CD8-positive, alpha-beta T cell (primary cell): ENCODE measurements at regions of chr11 and their contacts with region 1.

Region 1: GRCh38 chr11:35165423-35166368 is 26.7 kb downstream of the CD44 start:
- DNase-seq: peak; percentile 69 to 99 (median 87)
- ATAC-seq: peak; percentile 66
- H3K4me3 ChIP-seq: peak overlapping the region; percentile 31 to 34
- H3K4me3 Mint-ChIP-seq: peak overlapping the region; percentile 74
- H3K27ac ChIP-seq: peak overlapping the region; percentile 96 to 97
- H3K27ac Mint-ChIP-seq: peak overlapping the region; percentile 100
- H3K4me1 ChIP-seq: peaks cover 97% of the 10 kb centered on the region
- H3K4me1 Mint-ChIP-seq: peaks cover 100% of the 10 kb centered on the region
- H3K27me3 ChIP-seq: no peaks in the 10 kb centered on the region
- H3K27me3 Mint-ChIP-seq: no peaks in the 10 kb centered on the region
- CTCF ChIP-seq: no peak

Region 2: GRCh38 chr11:34916015-34916842 is 249.5 kb before region 1 on chr11 and contains the starts of genes APIP and PDHX:
- CTCF ChIA-PET with region 1: no interaction called
- POLR2A ChIA-PET with region 1: no interaction called
- intact Hi-C with region 1: loop called in 1 of 2 experiments (anchors 1 kb)
- DNase-seq: peak; percentile 86 to 96 (median 94)
- ATAC-seq: peak; percentile 89
- H3K4me3 ChIP-seq: peak within 1 kb of the TSS; percentile 70 to 94
- H3K4me3 Mint-ChIP-seq: peak within 1 kb of the TSS; percentile 96
- H3K27ac ChIP-seq: peak within 1 kb of the TSS; percentile 57 to 72
- H3K27ac Mint-ChIP-seq: peak within 1 kb of the TSS; percentile 97
- H3K4me1 ChIP-seq: peaks cover 18% of the 10 kb centered on the region
- H3K4me1 Mint-ChIP-seq: peaks cover 53% of the 10 kb centered on the region
- H3K27me3 ChIP-seq: no peaks in the 10 kb centered on the region
- H3K27me3 Mint-ChIP-seq: no peaks in the 10 kb centered on the region
- CTCF ChIP-seq: no peak
- total RNA-seq, gene APIP: 5.4 to 6.4 TPM
- total RNA-seq, gene PDHX: 20.3 to 21.4 TPM

Region 3: DNA sequence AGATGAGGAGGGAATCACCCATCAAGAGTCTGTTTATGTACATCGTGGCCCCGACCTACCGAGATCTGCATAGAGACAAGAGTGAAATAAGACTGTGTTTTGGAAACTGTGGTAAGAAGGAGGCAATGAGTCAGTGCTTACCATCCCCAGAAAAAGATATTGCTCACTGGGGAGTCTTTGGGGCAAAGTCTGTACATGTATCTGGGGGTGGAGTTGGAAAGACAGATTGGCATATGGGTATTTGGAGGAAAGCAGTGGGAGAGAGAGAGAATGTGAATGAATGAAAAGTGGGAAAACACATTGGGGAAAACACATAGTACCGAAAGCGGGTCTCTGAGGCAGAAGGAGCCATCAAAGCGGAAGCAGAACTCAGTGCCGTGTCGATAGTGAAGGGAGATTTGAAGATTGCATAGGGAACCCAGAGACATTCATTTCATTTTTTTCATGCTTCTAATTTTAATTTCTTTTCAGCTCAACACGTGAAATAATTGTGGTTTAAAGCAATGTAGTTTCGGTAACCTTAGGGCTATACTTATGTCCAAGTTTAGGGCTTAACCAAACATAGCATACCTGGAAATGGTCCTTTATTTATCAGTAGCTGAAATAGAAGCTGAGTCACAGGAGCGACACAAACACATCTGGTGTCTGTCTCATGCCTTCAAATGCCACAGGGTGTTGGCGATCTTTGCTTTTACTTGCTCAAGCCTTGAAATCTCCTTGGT is 125.3 kb before region 1 on chr11:
- CTCF ChIA-PET with region 1: interaction called, 3 read pairs
- POLR2A ChIA-PET with region 1: interaction called, 5 read pairs
- intact Hi-C with region 1: loop called in 1 of 2 experiments (anchors 1 kb)
- DNase-seq: peak in 8 of 9 experiments; percentile 16 to 87 (median 55)
- ATAC-seq: peak; percentile 77
- H3K4me3 ChIP-seq: peak overlapping the region in 1 of 2 experiments; percentile 46
- H3K4me3 Mint-ChIP-seq: peak overlapping the region; percentile 79
- H3K27ac ChIP-seq: peak overlapping the region; percentile 36 to 83
- H3K27ac Mint-ChIP-seq: peak overlapping the region; percentile 97
- H3K4me1 ChIP-seq: peaks cover 25% of the 10 kb centered on the region
- H3K4me1 Mint-ChIP-seq: peaks cover 35% of the 10 kb centered on the region
- H3K27me3 ChIP-seq: no peaks in the 10 kb centered on the region
- H3K27me3 Mint-ChIP-seq: no peaks in the 10 kb centered on the region
- CTCF ChIP-seq: no peak

Region 4: DNA sequence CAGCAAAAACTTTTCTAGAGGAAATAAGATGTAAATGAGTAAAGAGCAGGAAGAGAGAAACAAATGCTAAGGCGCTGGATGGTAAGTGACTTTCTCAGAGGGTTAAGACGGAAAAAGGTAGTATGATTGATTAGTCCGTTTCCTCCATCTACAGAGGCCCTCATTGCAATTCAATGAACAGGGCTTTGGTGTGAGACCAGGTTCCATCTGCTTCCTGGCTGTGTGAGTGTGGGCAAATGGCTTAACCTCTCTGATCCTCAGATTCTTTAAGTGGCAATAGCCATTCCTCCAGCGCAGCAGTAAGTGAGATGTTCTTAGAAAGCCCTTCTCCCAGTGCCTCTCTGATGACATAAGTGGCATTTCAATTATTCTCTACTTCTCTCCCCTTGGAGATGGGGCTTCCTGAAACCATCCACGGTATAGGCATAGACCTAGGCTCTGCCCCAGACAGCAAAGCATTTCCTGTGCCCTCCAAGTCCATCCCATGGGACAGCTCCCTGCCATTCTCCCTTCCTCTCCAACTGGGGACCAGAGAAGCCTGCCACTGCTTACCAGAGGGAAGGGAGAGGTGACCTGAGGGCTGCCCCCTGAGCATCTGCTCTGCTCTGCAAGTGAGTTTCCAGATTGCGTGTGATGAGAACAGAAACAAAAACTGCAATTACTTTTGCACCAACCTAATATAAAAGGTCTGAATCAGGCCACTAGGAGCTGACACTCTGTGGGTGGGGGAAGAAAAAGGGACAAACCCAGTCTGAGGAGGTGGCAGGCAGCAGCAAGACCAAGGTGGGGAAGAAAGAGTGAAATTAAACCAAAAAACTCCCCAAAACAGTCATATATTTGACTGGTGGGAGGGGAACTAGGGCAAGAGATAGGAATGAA is 39.5 kb before region 1 on chr11:
- CTCF ChIA-PET with region 1: no interaction called
- POLR2A ChIA-PET with region 1: no interaction called
- intact Hi-C with region 1: no loop called
- DNase-seq: peak in 2 of 9 experiments; percentile 48 to 58
- ATAC-seq: peak; percentile 38
- H3K4me3 ChIP-seq: no peak overlapping the region
- H3K4me3 Mint-ChIP-seq: peak overlapping the region; percentile 44
- H3K27ac ChIP-seq: no peak overlapping the region
- H3K27ac Mint-ChIP-seq: peak overlapping the region; percentile 70
- H3K4me1 ChIP-seq: peaks cover 38% of the 10 kb centered on the region
- H3K4me1 Mint-ChIP-seq: peaks cover 54% of the 10 kb centered on the region
- H3K27me3 ChIP-seq: no peaks in the 10 kb centered on the region
- H3K27me3 Mint-ChIP-seq: no peaks in the 10 kb centered on the region
- CTCF ChIP-seq: no peak

Region 5: GRCh38 chr11:35138943-35139721 is 26.6 kb before region 1 on chr11 and contains the start of gene CD44:
- CTCF ChIA-PET with region 1: interaction called, 92 read pairs
- POLR2A ChIA-PET with region 1: interaction called, 32 read pairs
- intact Hi-C with region 1: loop called (anchors 1 kb)
- DNase-seq: peak; percentile 67 to 93 (median 85)
- ATAC-seq: peak; percentile 83
- H3K4me3 ChIP-seq: peak within 1 kb of the TSS; percentile 80 to 97
- H3K4me3 Mint-ChIP-seq: peak within 1 kb of the TSS; percentile 90
- H3K27ac ChIP-seq: peak within 1 kb of the TSS; percentile 82 to 98
- H3K27ac Mint-ChIP-seq: peak within 1 kb of the TSS; percentile 98
- H3K4me1 ChIP-seq: peaks cover 35% of the 10 kb centered on the region
- H3K4me1 Mint-ChIP-seq: peaks cover 47% of the 10 kb centered on the region
- H3K27me3 ChIP-seq: no peaks in the 10 kb centered on the region
- H3K27me3 Mint-ChIP-seq: no peaks in the 10 kb centered on the region
- CTCF ChIP-seq: no peak
- total RNA-seq, gene CD44: 1,070 to 1,104 TPM

Region 6: GRCh38 chr11:35182317-35182939 is 16.7 kb after region 1 on chr11:
- CTCF ChIA-PET with region 1: interaction called, 80 read pairs
- POLR2A ChIA-PET with region 1: interaction called, 203 read pairs
- intact Hi-C with region 1: loop called in 1 of 2 experiments (anchors 1 kb)
- DNase-seq: peak in 1 of 9 experiments; percentile 24
- ATAC-seq: no peak
- H3K4me3 ChIP-seq: no peak overlapping the region
- H3K4me3 Mint-ChIP-seq: peak overlapping the region; percentile 24
- H3K27ac ChIP-seq: peak overlapping the region in 1 of 2 experiments; percentile 9
- H3K27ac Mint-ChIP-seq: peak overlapping the region; percentile 89
- H3K4me1 ChIP-seq: peaks cover 80% of the 10 kb centered on the region
- H3K4me1 Mint-ChIP-seq: peaks cover 86% of the 10 kb centered on the region
- H3K27me3 ChIP-seq: no peaks in the 10 kb centered on the region
- H3K27me3 Mint-ChIP-seq: no peaks in the 10 kb centered on the region
- CTCF ChIP-seq: no peak

Region 7: GRCh38 chr11:35246745-35247144 is 81.0 kb after region 1 on chr11:
- CTCF ChIA-PET with region 1: interaction called, 3 read pairs
- POLR2A ChIA-PET with region 1: interaction called, 3 read pairs
- intact Hi-C with region 1: loop called in 1 of 2 experiments (anchors 5 kb)
- DNase-seq: no peak
- ATAC-seq: no peak
- H3K4me3 ChIP-seq: no peak overlapping the region
- H3K4me3 Mint-ChIP-seq: no peak overlapping the region
- H3K27ac ChIP-seq: peak overlapping the region; percentile 79 to 84
- H3K27ac Mint-ChIP-seq: peak overlapping the region; percentile 98
- H3K4me1 ChIP-seq: peaks cover 63% of the 10 kb centered on the region
- H3K4me1 Mint-ChIP-seq: peaks cover 80% of the 10 kb centered on the region
- H3K27me3 ChIP-seq: no peaks in the 10 kb centered on the region
- H3K27me3 Mint-ChIP-seq: no peaks in the 10 kb centered on the region
- CTCF ChIP-seq: no peak